Dorsolateral prefrontal cortex (tissue), 120 donors: ENCODE measurements at regions of chr4 and their contacts with region 1.

Region 1: DNA sequence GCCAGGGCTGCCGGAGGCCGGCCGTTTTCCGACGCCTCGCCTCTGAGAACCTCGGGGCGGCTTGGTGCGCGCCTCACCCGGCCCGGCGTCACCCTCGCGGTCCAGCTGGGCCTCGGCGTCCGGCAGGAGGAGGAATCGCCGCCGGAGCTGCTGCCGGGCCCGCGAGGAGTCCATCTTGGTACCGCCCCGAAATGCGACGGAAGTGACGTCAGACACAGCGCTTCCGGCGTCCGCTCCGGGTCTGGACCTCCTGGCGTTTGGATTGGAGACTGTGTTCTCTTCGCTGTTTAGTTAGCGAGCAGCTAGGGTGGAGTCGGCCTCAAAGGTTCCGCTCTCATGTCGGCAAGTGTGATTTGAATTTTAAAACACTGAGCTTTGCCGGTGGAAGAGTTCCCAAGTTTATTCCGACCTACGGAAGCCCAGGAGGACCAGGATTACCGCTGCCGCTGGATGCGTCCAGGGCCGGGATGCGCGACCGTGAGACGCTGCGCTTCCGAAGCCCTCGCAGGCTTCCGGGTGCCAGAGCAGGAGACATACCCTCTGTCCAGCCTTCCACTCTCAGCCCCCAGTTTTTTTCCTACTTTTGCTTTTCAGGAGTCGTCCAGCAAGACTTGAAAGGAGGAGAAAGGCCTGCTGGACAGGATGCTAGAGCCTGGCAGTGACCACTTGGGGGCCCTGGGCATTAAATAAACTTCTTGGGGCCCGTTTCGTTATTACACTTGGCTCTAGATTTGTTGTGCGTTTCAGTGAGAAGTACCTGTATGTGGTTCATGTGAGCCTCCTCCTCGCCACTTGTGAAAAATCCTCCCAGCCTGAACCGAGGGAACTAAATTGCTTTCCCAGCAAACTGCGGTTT is at the start of gene TMEM128:
- DNase-seq: peak; percentile 91 to 96 (median 94)
- H3K4me3 ChIP-seq: peak within 1 kb of the TSS; percentile 75 to 100 (median 94)
- H3K27ac ChIP-seq: peak within 1 kb of the TSS; percentile 73 to 98 (median 93)
- H3K27me3 ChIP-seq: no peaks in the 10 kb centered on the region
- CTCF ChIP-seq: peak in 48 of 56 donors; percentile 5 to 64 (median 36)
- total RNA-seq, gene TMEM128: 9.1 to 32.5 (median 17.4) TPM

Region 2: GRCh38 chr4:4203688-4204400 is 44.4 kb before region 1 on chr4:
- intact Hi-C with region 1: no loop called
- DNase-seq: peak in 1 of 10 donors; percentile 63
- H3K4me3 ChIP-seq: peak overlapping the region in 1 of 59 donors; percentile 16
- H3K27ac ChIP-seq: peak overlapping the region in 1 of 59 donors; percentile 50
- H3K27me3 ChIP-seq: peaks cover 0 to 38% (median 4%) of the 10 kb centered on the region in 45 donors
- CTCF ChIP-seq: no peak

Region 3: GRCh38 chr4:4289941-4290850 is 41.9 kb after region 1 on chr4 and contains the starts of genes LYAR and ZBTB49:
- intact Hi-C with region 1: loop called in 1 of 2 experiments (anchors 2 kb)
- DNase-seq: peak; percentile 87 to 96 (median 92)
- H3K4me3 ChIP-seq: peak within 1 kb of the TSS; percentile 59 to 100 (median 88)
- H3K27ac ChIP-seq: peak within 1 kb of the TSS in 50 of 59 donors; percentile 1 to 89 (median 64)
- H3K27me3 ChIP-seq: no peaks in the 10 kb centered on the region
- CTCF ChIP-seq: peak in 42 of 56 donors; percentile 9 to 67 (median 42)
- total RNA-seq, gene LYAR: 3.5 to 13.6 (median 7.0) TPM
- total RNA-seq, gene ZBTB49: 4.4 to 19.7 (median 9.2) TPM

Region 4: GRCh38 chr4:4334798-4335520 is 86.7 kb after region 1 on chr4:
- intact Hi-C with region 1: loop called (anchors 1 to 2 kb)
- DNase-seq: peak in 9 of 10 donors; percentile 48 to 73 (median 58)
- H3K4me3 ChIP-seq: no peak overlapping the region
- H3K27ac ChIP-seq: no peak overlapping the region
- H3K27me3 ChIP-seq: no peaks in the 10 kb centered on the region
- CTCF ChIP-seq: peak in 55 of 56 donors; percentile 27 to 84 (median 68)

Region 5: GRCh38 chr4:4541661-4542570 is 293.7 kb after region 1 on chr4 and contains the start of gene STX18:
- intact Hi-C with region 1: loop called in 1 of 2 experiments (anchors 5 kb)
- DNase-seq: peak; percentile 60 to 89 (median 75)
- H3K4me3 ChIP-seq: peak within 1 kb of the TSS; percentile 68 to 100 (median 96)
- H3K27ac ChIP-seq: peak within 1 kb of the TSS in 57 of 59 donors; percentile 28 to 93 (median 78)
- H3K27me3 ChIP-seq: no peaks in the 10 kb centered on the region
- CTCF ChIP-seq: peak in 45 of 56 donors; percentile 11 to 67 (median 36)
- total RNA-seq, gene STX18: 17.3 to 46.2 (median 31.7) TPM